ENCODE measurements at regions of chr14 and their contacts with region 1.

Region 1: DNA sequence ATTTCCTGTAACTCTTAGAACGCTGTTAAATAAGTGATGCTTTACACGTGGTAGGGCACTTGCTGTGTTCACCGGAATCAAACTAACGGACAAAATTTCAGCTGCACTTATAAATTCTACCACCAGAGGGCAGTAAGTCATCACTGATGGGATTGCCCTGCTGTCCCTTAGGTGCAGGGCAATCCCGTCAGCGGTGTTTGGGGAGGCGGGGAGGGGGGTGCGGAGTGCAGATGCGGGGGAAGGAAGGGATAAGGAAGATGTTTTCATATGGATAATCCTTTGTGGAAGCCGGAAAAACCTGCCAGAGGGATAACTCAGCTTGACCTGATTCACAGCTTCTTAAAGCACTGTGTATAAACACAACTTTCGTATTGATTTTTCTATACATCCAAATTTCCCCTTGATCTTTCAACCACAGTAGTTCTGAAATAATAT is 21.7 kb upstream of the SLC10A1 start:
- DNase-seq: peak; percentile 61
- H3K4me3 ChIP-seq: no peak overlapping the region
- H3K27ac ChIP-seq: no peak overlapping the region
- H3K4me1 ChIP-seq: no peaks in the 10 kb centered on the region
- H3K27me3 ChIP-seq: peaks cover 32% of the 10 kb centered on the region

Region 2: GRCh38 chr14:69956970-69957369 is 138.2 kb after region 1 on chr14:
- in situ Hi-C with region 1: no loop called
- DNase-seq: no peak
- H3K4me3 ChIP-seq: no peak overlapping the region
- H3K27ac ChIP-seq: no peak overlapping the region
- H3K4me1 ChIP-seq: no peaks in the 10 kb centered on the region
- H3K27me3 ChIP-seq: no peaks in the 10 kb centered on the region

Region 3: DNA sequence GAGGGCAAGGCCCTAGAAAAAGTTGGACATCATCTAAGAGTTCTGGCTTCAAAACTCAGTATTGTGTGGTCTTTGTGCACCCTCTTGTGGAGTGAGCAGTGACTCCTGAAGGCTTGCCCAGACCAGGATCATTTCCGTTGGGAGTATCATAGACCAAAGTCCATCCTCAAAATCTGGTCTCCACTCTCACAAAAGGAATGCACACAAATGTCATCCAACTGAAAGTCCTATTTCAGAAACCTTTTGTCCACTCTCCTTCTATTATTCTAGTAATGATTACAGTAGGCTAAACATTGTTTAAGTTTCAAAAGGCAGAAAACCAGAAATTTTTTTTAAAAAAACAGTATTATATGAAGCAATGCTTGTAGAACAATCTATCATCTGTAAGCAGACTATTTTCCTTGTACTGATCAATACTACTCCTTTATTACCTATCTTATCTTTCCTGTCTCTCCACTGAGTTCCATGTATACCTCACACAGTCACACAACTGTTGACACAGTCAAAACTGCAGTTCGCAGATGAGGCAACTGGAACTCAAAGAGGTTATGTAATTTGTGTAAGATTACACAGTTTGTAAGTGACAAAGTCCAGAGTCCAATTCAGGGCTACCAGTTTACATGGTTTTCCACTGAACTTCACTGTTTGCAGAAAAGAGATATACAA is 499.3 kb after region 1 on chr14:
- in situ Hi-C with region 1: loop called (anchors 25 kb)
- DNase-seq: peak; percentile 61
- H3K4me3 ChIP-seq: no peak overlapping the region
- H3K27ac ChIP-seq: no peak overlapping the region
- H3K4me1 ChIP-seq: no peaks in the 10 kb centered on the region
- H3K27me3 ChIP-seq: no peaks in the 10 kb centered on the region; the same call in 1 of the 2 replicates

Region 4: DNA sequence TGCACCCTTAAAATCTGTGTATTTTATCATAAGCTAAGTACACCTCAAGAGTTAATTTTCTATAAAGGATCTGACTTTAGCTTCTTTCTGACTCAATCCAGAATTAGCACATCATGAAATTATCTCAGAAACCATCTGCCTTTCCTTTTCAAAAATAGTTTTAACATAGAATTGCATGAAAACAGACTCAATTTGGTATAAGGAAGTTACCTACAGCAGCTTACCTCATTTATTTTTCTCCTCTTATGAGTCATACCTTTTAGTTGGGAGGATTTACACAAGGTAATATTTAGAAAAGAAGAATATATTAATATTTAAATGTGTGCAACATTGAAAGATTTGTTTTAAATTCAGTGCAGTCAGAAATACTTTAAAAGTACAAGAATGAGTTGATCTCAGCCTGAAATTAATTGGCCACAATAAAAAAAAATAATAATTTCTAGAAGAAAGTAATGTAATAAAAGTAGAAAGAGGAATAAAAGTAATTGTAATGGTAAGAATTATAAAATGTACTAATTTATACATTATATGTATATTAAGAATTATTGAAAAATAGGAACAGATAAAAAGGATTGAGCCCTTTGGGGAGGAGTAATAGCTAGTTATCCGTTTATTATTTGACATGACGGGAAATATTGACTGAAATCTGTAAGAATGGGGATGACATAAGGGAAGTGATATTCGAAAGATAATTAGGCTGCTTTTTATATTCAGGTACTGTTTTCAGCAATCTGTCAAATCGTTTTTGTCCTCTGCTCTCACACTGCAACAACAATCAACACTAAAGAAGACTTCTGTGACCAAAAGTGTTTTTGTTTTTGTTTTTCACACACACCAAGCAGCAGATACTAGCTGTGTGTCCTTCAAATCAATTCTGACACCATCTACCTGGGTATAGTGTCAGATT is 653.7 kb after region 1 on chr14:
- in situ Hi-C with region 1: no loop called
- DNase-seq: no peak
- H3K4me3 ChIP-seq: no peak overlapping the region
- H3K27ac ChIP-seq: no peak overlapping the region
- H3K4me1 ChIP-seq: no peaks in the 10 kb centered on the region
- H3K27me3 ChIP-seq: no peaks in the 10 kb centered on the region